Breast epithelium (tissue), 4 donors: ENCODE measurements at regions of chr2 and their contacts with region 1.

Region 1: DNA sequence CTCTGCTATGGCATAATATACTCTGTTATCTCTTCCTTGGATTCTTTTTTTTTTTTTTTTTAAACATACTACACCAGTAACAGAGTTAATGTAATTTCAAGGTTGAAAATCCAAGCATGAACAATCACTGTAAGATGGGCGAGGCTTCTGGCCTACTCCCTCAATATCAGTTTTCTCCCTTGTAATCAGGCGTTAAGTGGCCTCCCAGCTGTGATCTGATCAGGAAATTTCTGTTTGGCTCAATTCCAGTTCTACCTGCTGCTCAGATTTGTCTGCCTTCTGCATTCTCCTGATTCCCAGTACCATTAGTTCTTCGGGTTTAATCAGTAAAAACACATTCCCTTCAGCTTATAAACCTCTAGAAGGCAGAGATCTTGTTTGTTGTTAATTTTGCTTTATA is 18.6 kb downstream of the PRKD3 start:
- DNase-seq: no peak
- H3K4me3 ChIP-seq: no peak overlapping the region
- H3K27ac ChIP-seq: no peak overlapping the region
- H3K4me1 ChIP-seq: no peaks in the 10 kb centered on the region
- H3K27me3 ChIP-seq: no peaks in the 10 kb centered on the region
- CTCF ChIP-seq: no peak
- POLR2A ChIP-seq: no peak

Region 2: GRCh38 chr2:37274359-37274965 is 31.6 kb before region 1 on chr2:
- intact Hi-C with region 1: no loop called
- DNase-seq: no peak
- H3K4me3 ChIP-seq: no peak overlapping the region
- H3K27ac ChIP-seq: no peak overlapping the region
- H3K4me1 ChIP-seq: no peaks in the 10 kb centered on the region
- H3K27me3 ChIP-seq: no peaks in the 10 kb centered on the region
- CTCF ChIP-seq: no peak
- POLR2A ChIP-seq: no peak

Region 3: DNA sequence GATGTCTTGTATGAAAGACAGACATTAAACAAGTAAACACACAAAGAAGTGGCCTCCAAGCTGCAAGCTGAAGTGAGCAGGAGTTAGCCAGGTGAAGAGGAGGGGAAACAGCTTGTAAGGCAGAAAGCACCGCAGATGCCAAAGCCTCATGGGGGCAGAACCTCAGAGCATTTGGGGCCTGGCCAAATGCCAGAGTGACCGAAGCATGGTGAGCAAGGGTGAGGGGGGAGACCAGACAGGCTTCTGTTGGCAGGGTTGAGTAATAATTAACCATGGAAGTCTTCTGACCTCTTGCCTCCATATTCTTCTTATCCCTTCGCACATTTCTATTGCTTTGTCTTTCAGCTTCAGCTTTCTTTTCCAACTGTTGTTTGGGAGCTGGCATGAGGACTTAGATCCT is 44.0 kb after region 1 on chr2:
- intact Hi-C with region 1: loop called (anchors 2 kb)
- DNase-seq: no peak
- H3K4me3 ChIP-seq: no peak overlapping the region
- H3K27ac ChIP-seq: no peak overlapping the region
- H3K4me1 ChIP-seq: peaks cover 0 to 3% of the 10 kb centered on the region in 2 donors
- H3K27me3 ChIP-seq: no peaks in the 10 kb centered on the region
- CTCF ChIP-seq: no peak
- POLR2A ChIP-seq: no peak